ENCODE measurements at regions of chr1 and their contacts with region 1.

Region 1: DNA sequence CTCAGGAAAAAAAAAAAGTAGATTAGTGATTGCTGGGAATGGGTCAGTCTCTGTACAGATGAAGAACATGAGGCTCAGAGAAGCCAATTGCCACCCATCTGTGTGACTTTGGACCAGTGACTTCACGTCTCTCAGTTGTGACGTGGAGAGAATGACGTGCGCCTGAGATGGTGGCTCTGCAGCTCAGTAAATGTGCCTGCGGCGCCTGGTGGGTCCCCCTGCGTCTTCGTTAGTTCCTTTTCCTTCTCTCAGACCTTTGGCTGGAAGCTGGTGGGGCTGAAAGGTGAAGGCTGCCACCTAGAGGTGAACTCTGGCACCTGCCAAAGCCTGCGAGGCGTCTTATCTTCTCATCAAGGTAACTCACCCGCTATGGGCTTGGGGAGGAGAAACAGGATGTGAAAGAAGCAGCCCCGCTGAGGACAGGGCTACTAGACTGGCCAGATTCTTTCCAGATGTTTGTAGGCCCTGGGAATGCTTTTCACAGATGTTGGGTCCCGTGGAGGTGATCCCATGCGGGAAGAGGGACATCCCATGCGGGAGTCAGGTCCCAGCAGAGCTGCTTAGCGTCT is 8.7 kb upstream of the E2F2 start:
- DNase-seq: peak; percentile 90
- H3K4me3 ChIP-seq: peak overlapping the region in 1 of 2 experiments; percentile 31; a peak in 1 of 4 replicates
- H3K27ac ChIP-seq: peak overlapping the region in 1 of 2 experiments; percentile 14; a peak in 1 of 4 replicates
- H3K4me1 ChIP-seq: peaks cover 4 to 9% of the 10 kb centered on the region in 2 experiments; a peak in 2 of 4 replicates
- H3K27me3 ChIP-seq: no peaks in the 10 kb centered on the region
- CTCF ChIP-seq: peak; percentile 97
- EP300 ChIP-seq: no peak
- RAD21 ChIP-seq: peak; percentile 94

Region 2: GRCh38 chr1:23496490-23497181 is 43.1 kb before region 1 on chr1:
- CTCF ChIA-PET with region 1: interaction called, 503 read pairs
- POLR2A ChIA-PET with region 1: interaction called, 11 read pairs
- DNase-seq: no peak
- H3K4me3 ChIP-seq: no peak overlapping the region; a peak in 1 of 4 replicates
- H3K27ac ChIP-seq: no peak overlapping the region
- H3K4me1 ChIP-seq: no peaks in the 10 kb centered on the region
- H3K27me3 ChIP-seq: no peaks in the 10 kb centered on the region
- CTCF ChIP-seq: no peak
- EP300 ChIP-seq: no peak
- RAD21 ChIP-seq: no peak

Region 3: DNA sequence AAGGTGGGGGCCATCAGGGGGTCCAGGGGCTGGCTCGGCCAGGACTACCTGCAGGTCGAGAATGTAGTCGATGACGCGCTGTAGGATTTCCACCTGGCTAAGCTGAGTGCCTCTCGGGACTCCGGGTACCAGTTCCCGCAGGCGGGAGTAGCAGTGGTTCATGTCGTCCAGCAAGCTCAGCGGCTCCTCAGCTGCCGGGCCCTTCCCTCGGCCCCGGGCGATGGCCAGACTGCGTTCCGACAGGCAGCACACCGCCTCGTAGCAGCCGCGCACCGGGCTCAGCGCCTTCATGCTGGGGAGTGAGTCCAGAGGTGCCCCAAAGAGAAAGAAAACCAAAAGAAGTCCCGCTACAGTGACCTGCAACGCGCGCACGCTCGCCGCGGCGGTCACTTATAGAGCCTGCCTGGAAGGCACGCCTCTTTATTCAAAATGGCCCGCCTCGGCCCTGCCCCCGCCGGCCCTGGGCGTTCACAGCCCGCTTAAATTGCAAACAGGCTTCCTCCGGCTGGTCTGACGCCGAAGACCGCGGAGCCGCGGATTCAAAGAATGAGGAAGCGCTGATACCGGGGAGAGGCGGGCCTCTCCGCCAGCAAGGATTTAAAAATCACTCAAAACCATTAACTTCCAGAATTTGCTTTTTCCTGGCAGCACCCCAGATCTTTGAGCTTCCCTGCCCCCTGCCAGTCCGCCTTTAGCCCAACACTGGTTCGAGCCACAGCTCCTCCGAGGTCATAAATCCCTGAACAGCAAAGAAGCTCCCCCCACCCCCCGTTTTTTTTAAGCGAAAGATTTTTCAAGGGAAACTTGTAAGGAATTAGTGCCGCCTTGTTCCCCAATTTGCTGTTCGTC is 19.6 kb after region 1 on chr1 and contains the start of gene ID3:
- CTCF ChIA-PET with region 1: interaction called, 81 read pairs
- POLR2A ChIA-PET with region 1: no interaction called
- DNase-seq: peak; percentile 83
- H3K4me3 ChIP-seq: peak within 1 kb of the TSS; percentile 88 to 92
- H3K27ac ChIP-seq: peak within 1 kb of the TSS; percentile 98 to 100
- H3K4me1 ChIP-seq: peaks cover 60 to 77% of the 10 kb centered on the region in 2 experiments
- H3K27me3 ChIP-seq: no peaks in the 10 kb centered on the region
- CTCF ChIP-seq: no peak
- EP300 ChIP-seq: peak; percentile 14 to 58; a peak in 3 of 4 replicates
- RAD21 ChIP-seq: 0 out of 2 replicates have a peak, but pooled peaks have one; percentile 0
- polyA plus RNA-seq, gene ID3: 394 and 504 TPM in 2 replicates

Region 4: DNA sequence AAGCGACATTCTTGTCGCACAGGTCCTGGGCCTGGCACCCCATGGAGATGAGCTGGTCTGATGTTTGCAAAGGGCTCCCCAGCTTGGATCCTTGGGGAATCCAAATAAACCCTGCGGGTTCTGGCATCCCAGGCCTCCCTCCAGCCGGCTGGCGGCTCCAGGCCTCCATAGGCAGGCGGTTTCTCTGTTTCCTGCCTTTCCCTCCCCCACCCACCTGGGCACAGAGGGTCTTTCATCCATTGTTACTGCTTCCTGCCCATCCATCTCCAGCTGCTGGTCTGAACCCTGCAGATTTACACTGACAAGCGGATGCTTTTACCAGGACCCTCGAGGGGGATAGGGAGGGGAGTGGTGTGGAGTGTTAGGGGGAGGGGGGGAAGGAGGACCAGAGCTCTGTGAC is 58.6 kb after region 1 on chr1:
- CTCF ChIA-PET with region 1: interaction called, 14 read pairs
- POLR2A ChIA-PET with region 1: no interaction called
- DNase-seq: peak; percentile 81
- H3K4me3 ChIP-seq: no peak overlapping the region
- H3K27ac ChIP-seq: peak overlapping the region in 1 of 2 experiments; percentile 82; a peak in 2 of 4 replicates
- H3K4me1 ChIP-seq: peaks cover 0 to 21% of the 10 kb centered on the region in 2 experiments; a peak in 2 of 4 replicates
- H3K27me3 ChIP-seq: no peaks in the 10 kb centered on the region
- CTCF ChIP-seq: no peak
- EP300 ChIP-seq: no peak
- RAD21 ChIP-seq: no peak

Region 5: DNA sequence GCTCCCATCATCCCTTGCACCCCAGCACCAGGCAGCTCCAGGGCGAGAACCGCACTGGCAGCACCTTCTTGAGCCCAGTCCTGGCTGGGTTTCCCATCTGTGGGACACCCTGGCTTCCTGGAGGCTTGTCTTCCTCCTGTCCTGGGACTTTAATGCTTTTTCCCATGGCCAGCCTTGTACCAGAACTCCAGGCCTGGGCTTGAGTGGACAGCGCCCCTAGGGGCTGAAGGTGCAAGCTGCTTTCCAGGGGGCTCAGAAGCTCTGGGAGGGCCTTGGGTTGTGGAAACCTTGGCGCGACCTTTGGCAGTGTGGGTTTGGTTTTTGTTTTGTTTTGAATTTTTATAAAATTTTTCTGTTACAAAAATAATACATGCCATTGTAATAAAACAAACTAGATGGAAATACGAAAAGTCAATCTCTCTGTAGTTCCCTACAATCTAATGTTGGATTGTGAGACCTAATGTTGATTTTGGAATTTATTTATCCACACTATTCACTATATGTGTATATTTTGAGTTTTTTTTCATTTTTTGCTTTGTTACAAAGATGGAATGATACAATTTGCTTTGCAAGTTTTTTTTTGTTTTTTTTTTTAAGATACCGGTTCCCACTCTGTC is 118.0 kb after region 1 on chr1:
- CTCF ChIA-PET with region 1: interaction called, 16 read pairs
- POLR2A ChIA-PET with region 1: no interaction called
- DNase-seq: peak; percentile 79
- H3K4me3 ChIP-seq: peak overlapping the region in 1 of 2 experiments; percentile 43; a peak in 1 of 4 replicates
- H3K27ac ChIP-seq: no peak overlapping the region
- H3K4me1 ChIP-seq: no peaks in the 10 kb centered on the region
- H3K27me3 ChIP-seq: no peaks in the 10 kb centered on the region
- CTCF ChIP-seq: peak; percentile 89
- EP300 ChIP-seq: no peak
- RAD21 ChIP-seq: peak; percentile 60

Region 6: GRCh38 chr1:23670709-23671108 is 130.9 kb after region 1 on chr1:
- CTCF ChIA-PET with region 1: interaction called, 34 read pairs
- POLR2A ChIA-PET with region 1: no interaction called
- DNase-seq: no peak
- H3K4me3 ChIP-seq: no peak overlapping the region
- H3K27ac ChIP-seq: no peak overlapping the region
- H3K4me1 ChIP-seq: no peaks in the 10 kb centered on the region
- H3K27me3 ChIP-seq: no peaks in the 10 kb centered on the region; the same call in 1 of the 2 replicates
- CTCF ChIP-seq: no peak
- EP300 ChIP-seq: no peak
- RAD21 ChIP-seq: no peak

Measured in SK-N-SH (cell line).